ENCODE measurements at regions of chr3 and their contacts with region 1.

Region 1: DNA sequence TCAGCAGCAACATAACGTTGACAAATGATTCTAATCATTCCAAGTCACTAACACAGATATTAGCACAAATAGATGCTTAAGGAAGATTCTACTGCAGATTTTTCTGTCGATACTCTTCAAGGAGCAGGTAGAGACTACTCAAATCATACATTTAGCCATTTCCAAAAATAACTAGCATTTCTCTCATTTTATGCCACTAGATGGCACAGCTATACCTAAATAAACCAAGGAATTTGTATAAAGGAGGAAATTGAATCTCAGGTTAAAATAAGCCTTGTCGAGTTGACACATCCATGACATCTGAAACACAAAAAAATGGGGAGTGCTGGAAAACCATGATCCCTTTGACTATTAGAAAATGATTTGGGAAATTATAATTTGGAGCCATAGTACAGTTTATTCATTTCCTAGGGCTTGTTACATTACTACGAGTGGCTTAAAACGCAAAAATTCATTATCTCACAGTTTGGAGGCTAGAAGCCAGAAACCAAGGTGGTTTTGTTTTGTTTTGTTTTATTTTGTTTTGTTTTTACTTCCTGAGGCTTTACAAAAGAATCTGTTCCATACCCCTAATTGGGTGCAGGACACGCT is 59.5 kb upstream of the STRIT1 start:
- DNase-seq: no peak
- ATAC-seq: peak; percentile 54
- H3K4me3 ChIP-seq: no peak overlapping the region
- H3K27ac ChIP-seq: no peak overlapping the region
- H3K4me1 ChIP-seq: no peaks in the 10 kb centered on the region
- H3K27me3 ChIP-seq: no peaks in the 10 kb centered on the region; a peak in 1 of 4 replicates
- CTCF ChIP-seq: peak; percentile 16 to 59 (median 42); a peak in 3 of 6 replicates
- EP300 ChIP-seq: no peak
- POLR2A ChIP-seq: no peak
- RAD21 ChIP-seq: peak; percentile 56

Region 2: DNA sequence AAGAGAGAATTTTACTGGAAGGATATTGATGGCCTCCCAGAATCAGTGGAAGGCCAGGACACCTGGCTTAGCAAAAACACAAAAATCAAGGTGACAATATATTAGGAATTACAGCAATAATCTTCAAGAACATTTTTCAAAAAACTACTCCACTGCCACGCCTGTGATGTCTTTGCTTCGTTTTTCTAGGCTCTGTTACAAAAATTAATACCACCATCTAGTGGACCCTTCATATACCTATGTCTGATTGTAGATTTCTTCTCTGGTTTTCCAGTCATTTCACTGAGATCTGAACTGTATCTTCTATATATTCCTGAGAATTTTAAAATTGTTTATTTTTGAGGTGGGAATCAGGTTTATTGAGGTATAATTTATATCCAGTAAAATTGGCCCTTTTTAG is 506.9 kb after region 1 on chr3:
- CTCF ChIA-PET with region 1: no interaction called
- POLR2A ChIA-PET with region 1: no interaction called
- RAD21 ChIA-PET with region 1: no interaction called
- SMC1A ChIA-PET with region 1: no interaction called
- in situ Hi-C with region 1: no loop called
- intact Hi-C with region 1: loop called (anchors 5 kb)
- DNase-seq: no peak
- ATAC-seq: peak; percentile 75
- H3K4me3 ChIP-seq: no peak overlapping the region
- H3K27ac ChIP-seq: no peak overlapping the region
- H3K4me1 ChIP-seq: no peaks in the 10 kb centered on the region
- H3K27me3 ChIP-seq: no peaks in the 10 kb centered on the region
- CTCF ChIP-seq: peak; percentile 18 to 55 (median 30); a peak in 4 of 6 replicates
- EP300 ChIP-seq: no peak
- POLR2A ChIP-seq: no peak
- RAD21 ChIP-seq: peak; percentile 47; the same call in 1 of the 2 replicates

Measured in GM12878 (cell line).